Activated CD8-positive, alpha-beta T cell treated with anti-CD3 and anti-CD28 coated beads for 36 hours (primary cell): ENCODE measurements at regions of chr1 and their contacts with region 1.

Region 1: DNA sequence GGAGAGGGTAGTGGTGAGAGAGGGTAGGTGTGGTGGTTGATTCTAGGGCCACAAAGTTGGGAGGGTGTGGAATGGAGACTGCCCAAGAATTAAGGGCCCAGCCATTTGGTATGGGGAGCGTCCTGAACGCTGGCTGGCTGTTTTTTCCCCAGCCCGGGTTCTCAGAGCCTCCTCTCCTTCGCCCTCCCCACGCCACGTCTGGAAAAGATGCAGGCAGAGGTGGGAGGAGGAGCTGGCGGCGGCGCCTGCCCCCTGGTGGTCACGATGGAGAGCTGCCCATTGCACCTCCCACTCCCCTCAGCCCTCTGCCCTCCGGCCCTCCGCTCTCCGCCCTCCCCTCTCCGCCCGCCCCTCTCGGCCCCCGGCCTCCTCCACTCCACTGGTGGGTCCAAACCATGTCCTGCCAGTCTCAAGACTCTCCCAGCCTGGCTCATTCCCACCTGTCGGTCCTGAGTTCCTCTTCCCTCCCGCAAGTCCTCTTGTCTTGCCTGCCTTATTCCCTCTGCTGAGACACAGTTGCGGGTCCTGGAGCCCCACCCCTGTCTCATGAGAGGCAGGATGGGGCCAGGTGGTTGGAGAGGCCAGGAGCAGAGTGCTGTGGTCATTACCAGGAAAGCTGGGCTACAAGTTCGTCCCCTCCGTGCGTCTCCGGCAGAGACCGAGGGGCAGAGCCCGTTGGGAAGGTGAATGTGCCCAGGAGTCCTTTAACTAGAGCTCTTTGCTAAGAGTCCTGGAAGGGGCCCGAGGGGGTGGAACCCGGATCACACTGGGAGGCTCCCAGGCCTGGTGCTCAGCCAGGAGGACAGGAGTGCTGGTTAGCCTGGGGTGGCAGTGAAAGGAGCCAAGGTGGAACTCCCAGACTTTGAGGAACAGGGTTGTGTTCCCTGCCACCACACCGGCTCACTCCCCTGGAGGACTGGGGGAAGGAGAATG is 22.6 kb downstream of the ETNK2 start:
- DNase-seq: peak; percentile 64
- ATAC-seq: peak; percentile 90
- H3K4me3 Mint-ChIP-seq: peak overlapping the region; percentile 12
- H3K27ac Mint-ChIP-seq: no peak overlapping the region
- H3K4me1 Mint-ChIP-seq: peaks cover 5% of the 10 kb centered on the region
- H3K27me3 Mint-ChIP-seq: no peaks in the 10 kb centered on the region
- CTCF ChIP-seq: peak; percentile 95

Region 2: GRCh38 chr1:203861379-203862184 is 267.6 kb before region 1 on chr1 and contains the start of gene SNRPE:
- CTCF ChIA-PET with region 1: interaction called, 47 read pairs
- POLR2A ChIA-PET with region 1: interaction called, 4 read pairs
- intact Hi-C with region 1: loop called (anchors 1 kb)
- DNase-seq: peak; percentile 97
- ATAC-seq: peak; percentile 97
- H3K4me3 Mint-ChIP-seq: peak within 1 kb of the TSS; percentile 100
- H3K27ac Mint-ChIP-seq: peak within 1 kb of the TSS; percentile 99
- H3K4me1 Mint-ChIP-seq: peaks cover 20% of the 10 kb centered on the region
- H3K27me3 Mint-ChIP-seq: no peaks in the 10 kb centered on the region
- CTCF ChIP-seq: peak; percentile 86
- total RNA-seq, gene SNRPE: 344 to 373 TPM

Region 3: GRCh38 chr1:203871107-203871875 is 257.9 kb before region 1 on chr1:
- CTCF ChIA-PET with region 1: interaction called, 67 read pairs
- POLR2A ChIA-PET with region 1: interaction called, 5 read pairs
- intact Hi-C with region 1: no loop called
- DNase-seq: peak; percentile 27
- ATAC-seq: peak; percentile 74
- H3K4me3 Mint-ChIP-seq: no peak overlapping the region
- H3K27ac Mint-ChIP-seq: no peak overlapping the region
- H3K4me1 Mint-ChIP-seq: peaks cover 7% of the 10 kb centered on the region
- H3K27me3 Mint-ChIP-seq: no peaks in the 10 kb centered on the region
- CTCF ChIP-seq: peak; percentile 59

Region 4: DNA sequence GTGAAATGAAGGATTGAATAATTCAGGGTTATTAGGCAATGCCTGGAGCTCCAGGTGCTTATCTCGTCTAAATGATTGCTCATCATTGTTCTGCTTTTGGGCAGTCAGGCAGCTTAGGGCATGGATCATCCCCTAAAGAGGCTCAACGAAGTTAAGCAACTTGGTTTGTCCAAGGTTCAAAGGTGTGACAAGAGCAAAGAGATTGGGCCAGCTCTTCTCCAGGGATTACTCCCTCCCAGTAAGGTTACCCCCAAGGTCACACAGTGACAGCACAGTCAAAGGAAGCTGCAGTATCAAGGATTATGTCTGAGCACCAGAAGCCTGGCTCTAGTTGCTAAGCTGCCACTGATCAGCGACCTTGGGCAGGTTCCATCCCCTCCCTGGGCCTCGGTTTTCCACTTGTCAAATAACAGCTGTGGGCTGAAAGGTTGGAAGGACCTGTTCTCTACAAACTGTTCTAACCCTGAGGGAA is 15.8 kb after region 1 on chr1:
- CTCF ChIA-PET with region 1: interaction called, 39 read pairs
- POLR2A ChIA-PET with region 1: no interaction called
- intact Hi-C with region 1: no loop called
- DNase-seq: no peak
- ATAC-seq: no peak
- H3K4me3 Mint-ChIP-seq: no peak overlapping the region
- H3K27ac Mint-ChIP-seq: no peak overlapping the region
- H3K4me1 Mint-ChIP-seq: no peaks in the 10 kb centered on the region
- H3K27me3 Mint-ChIP-seq: no peaks in the 10 kb centered on the region
- CTCF ChIP-seq: no peak